Right ventricle myocardium superior (tissue), 1 donor: ENCODE measurements at regions of chr10 and their contacts with region 1.

Region 1: DNA sequence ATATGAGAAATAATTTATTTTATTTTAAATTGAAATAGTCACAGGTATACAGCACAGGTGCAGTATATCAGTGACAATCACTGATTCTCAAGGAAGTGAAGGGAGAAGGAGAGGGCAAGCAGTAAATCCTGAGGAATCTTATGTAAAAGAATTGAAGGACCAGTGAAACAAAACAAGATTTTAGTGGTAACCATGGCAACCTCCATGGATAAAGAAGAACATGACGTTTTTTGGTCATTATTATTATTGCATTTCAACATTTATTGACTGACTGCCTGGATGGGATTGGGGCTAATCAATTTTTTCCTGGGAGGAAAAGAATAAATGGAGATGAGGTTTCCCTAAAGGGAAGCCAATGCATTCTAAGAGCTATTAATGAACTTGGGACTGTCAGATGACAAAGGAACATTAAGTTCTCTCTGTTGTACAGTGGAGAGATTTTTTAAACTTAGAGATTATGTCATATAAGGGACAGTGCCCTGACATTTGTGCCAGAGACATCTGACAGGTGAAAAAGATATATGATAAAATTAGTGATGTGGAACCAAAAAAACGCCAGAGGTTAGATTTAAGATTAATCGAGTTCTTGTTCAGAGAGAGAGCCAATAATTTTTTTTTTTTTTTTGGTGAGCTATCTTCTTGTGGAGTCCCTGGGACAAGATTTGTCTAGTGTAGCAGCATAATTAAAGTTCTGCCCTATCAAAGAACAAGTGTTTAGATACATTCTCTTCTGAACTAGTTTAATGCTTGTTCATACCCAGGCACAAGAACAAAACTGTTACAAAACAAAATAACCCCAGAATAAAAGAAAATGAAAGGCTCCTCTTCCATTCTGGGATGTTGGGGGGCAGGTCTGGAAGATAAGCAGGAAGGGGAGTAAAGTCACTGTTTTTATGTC is 279.9 kb downstream of the CSTF2T start:
- DNase-seq: no peak
- ATAC-seq: peak; percentile 70

Region 2: DNA sequence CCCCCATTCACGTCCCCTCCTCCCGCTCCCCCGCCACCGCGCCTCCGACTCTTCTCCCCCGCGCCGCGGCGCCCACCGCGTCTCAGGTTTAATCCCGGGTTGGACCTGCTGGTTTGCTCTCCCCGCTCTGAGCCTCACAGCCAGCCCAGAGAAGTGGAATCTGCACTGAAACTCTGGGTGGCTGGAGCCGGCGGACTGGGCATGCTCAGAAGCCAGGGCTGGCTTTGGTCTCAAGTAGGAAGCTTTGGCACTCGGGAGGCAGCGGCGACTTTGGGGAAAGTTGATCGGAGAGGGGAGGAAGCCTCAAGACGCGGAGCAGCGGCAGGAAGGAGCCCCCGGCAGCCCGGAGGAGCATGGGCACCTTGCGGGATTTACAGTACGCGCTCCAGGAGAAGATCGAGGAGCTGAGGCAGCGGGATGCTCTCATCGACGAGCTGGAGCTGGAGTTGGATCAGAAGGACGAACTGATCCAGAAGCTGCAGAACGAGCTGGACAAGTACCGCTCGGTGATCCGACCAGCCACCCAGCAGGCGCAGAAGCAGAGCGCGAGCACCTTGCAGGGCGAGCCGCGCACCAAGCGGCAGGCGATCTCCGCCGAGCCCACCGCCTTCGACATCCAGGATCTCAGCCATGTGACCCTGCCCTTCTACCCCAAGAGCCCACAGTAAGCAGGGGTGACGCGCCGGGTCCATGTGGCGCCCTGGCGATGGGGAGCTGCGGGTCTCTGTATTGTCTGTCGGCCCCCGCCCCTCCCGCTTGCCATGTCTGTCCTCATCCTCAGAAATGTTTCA is 345.0 kb before region 1 on chr10 and contains the start of gene PRKG1:
- intact Hi-C with region 1: loop called (anchors 10 kb)
- DNase-seq: peak; percentile 88
- ATAC-seq: peak; percentile 95
- total RNA-seq, gene PRKG1: 28.2 TPM

Region 3: DNA sequence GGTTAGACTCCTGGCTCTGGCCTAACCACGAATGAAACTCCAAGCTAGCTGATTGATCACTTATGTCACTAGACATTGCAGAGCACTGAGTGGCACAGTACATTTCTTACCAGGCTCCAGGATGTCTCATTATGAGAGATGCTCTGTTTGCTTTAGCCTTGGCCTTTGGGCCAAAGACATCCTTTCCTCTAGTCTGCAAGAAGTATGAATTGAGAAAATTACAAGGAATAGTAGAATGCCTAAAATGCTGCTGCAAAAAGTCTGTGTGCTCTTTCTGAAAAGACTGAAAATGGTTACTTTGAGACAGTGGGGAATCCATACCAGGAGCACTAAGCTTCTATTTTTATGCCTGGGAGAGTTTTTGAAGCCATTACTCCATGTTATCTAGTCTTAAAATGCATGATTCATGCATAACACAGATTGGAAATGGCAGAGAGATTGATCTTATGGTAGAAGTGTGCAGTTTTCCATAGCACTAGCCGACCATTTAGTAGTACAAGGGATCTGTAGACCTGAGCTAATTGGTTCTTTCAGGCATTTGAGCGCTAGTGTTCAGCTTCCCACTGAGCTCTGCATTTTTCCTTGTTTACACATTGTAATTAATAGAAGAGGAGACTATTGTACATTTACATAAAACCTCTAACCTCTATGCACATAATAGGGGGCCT is 41.4 kb before region 1 on chr10:
- intact Hi-C with region 1: loop called (anchors 5 kb)
- DNase-seq: no peak
- ATAC-seq: no peak